ENCODE measurements at regions of chr2 and their contacts with region 1.

Region 1: DNA sequence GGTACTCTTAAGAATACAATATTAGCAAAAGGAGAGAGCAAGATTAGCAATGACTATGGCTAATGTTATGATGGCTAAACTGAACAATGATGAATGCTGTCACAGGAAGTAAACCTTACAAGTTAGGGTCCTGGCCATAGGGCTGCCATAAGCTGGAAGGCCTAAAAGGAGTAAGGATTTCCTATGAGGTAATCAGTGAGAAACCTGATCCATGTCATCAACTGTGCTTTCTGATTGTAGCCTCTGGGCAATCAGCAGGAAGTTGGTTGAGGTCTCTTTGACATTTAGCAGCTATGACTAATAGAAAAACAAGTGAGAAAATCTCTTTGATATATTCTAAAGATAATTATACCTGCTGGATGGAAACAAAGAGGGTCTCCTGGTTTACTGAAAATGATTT is 193.0 kb downstream of the RAB3GAP1 start:
- DNase-seq: peak; percentile 92
- H3K4me3 ChIP-seq: no peak overlapping the region
- H3K27ac ChIP-seq: peak overlapping the region; percentile 60
- H3K4me1 ChIP-seq: peaks cover 9% of the 10 kb centered on the region
- H3K27me3 ChIP-seq: no peaks in the 10 kb centered on the region
- CTCF ChIP-seq: no peak
- POLR2A ChIP-seq: no peak

Region 2: DNA sequence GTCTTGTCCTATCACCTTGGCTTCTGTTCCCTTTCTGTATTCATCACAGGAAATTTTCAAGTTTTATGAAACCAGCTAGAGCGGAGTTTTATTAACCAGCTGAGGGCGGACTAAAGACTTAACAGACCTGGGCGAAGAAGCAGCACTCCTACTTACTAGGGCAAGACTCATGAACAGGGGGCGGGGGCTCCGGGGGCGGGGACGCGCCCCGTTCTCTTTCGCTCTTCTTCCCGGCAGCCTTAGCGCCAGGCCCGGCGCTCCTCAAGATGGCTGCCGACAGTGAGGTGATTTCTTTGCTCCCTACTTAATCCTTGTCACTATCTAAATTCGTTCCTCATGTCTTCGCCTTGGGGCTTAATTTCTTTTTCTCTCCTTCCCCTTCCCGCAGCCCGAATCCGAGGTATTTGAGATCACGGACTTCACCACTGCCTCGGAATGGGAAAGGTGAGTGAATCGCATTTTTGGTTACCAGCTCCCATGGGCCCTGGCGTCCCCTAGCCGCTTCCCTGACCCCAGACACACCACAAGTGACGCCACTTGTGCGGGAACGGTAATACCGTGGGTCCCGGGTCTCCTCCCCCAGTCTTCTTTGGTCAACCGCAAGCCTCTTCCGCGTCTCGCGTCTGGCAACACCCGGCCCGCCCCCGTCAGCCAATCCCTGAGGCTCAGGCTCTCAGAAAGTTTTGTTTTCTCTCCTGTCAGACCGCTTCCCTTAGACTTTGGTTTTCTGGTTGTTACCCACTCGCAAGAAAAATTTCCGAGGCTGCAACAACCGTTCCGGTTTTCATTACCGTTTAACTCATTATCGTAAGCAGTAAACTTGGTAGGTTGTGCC is 192.8 kb before region 1 on chr2 and contains the start of gene RAB3GAP1:
- CTCF ChIA-PET with region 1: no interaction called
- POLR2A ChIA-PET with region 1: no interaction called
- dilution Hi-C with region 1: no loop called
- intact Hi-C with region 1: loop called (anchors 5 kb)
- DNase-seq: peak; percentile 90
- H3K4me3 ChIP-seq: peak within 1 kb of the TSS; percentile 54 to 99 (median 87)
- H3K27ac ChIP-seq: peak within 1 kb of the TSS; percentile 83
- H3K4me1 ChIP-seq: peaks cover 30% of the 10 kb centered on the region
- H3K27me3 ChIP-seq: peaks cover 0 to 3% of the 10 kb centered on the region in 2 experiments
- CTCF ChIP-seq: no peak
- POLR2A ChIP-seq: peak; percentile 95
- total RNA-seq, gene RAB3GAP1: 37.2 and 39.5 TPM in 2 replicates

Region 3: DNA sequence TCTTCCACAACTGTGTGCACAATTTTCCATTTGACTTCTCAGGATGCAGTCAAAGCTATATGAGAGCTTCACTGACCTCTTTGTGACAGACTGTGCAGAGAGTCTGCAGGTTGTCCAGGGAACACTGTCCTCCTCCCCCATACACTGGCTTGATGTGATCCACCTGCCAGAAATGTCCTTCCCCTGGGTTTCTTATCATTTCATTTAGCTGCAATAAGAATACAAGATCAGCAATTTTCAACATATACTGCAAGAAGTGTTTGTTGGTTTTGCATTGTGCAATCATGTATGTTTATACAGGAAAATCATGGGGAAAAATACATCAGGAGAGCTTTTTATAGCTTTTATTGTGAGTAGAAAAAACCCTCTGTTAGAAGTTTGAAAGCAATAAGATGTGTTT is 42.3 kb before region 1 on chr2:
- CTCF ChIA-PET with region 1: no interaction called
- POLR2A ChIA-PET with region 1: no interaction called
- dilution Hi-C with region 1: no loop called
- intact Hi-C with region 1: no loop called
- DNase-seq: no peak
- H3K4me3 ChIP-seq: no peak overlapping the region
- H3K27ac ChIP-seq: no peak overlapping the region
- H3K4me1 ChIP-seq: no peaks in the 10 kb centered on the region
- H3K27me3 ChIP-seq: no peaks in the 10 kb centered on the region
- CTCF ChIP-seq: no peak
- POLR2A ChIP-seq: no peak

Region 4: GRCh38 chr2:135299656-135300244 is 54.7 kb after region 1 on chr2:
- CTCF ChIA-PET with region 1: no interaction called
- POLR2A ChIA-PET with region 1: no interaction called
- dilution Hi-C with region 1: no loop called
- intact Hi-C with region 1: loop called (anchors 10 kb)
- DNase-seq: peak; percentile 70
- H3K4me3 ChIP-seq: no peak overlapping the region
- H3K27ac ChIP-seq: no peak overlapping the region
- H3K4me1 ChIP-seq: peaks cover 16% of the 10 kb centered on the region
- H3K27me3 ChIP-seq: no peaks in the 10 kb centered on the region
- CTCF ChIP-seq: no peak
- POLR2A ChIP-seq: no peak